Spleen (tissue), 13 donors: ENCODE measurements at regions of chr9 and their contacts with region 1.

Region 1: GRCh38 chr9:1718836-1719235 is 296.3 kb upstream of the SMARCA2 start:
- DNase-seq: no peak
- H3K4me3 ChIP-seq: no peak overlapping the region
- H3K27ac ChIP-seq: no peak overlapping the region
- H3K4me1 ChIP-seq: no peaks in the 10 kb centered on the region
- H3K27me3 ChIP-seq: peaks cover 0 to 4% (median 0%) of the 10 kb centered on the region in 7 donors
- CTCF ChIP-seq: no peak
- POLR2A ChIP-seq: no peak

Region 2: DNA sequence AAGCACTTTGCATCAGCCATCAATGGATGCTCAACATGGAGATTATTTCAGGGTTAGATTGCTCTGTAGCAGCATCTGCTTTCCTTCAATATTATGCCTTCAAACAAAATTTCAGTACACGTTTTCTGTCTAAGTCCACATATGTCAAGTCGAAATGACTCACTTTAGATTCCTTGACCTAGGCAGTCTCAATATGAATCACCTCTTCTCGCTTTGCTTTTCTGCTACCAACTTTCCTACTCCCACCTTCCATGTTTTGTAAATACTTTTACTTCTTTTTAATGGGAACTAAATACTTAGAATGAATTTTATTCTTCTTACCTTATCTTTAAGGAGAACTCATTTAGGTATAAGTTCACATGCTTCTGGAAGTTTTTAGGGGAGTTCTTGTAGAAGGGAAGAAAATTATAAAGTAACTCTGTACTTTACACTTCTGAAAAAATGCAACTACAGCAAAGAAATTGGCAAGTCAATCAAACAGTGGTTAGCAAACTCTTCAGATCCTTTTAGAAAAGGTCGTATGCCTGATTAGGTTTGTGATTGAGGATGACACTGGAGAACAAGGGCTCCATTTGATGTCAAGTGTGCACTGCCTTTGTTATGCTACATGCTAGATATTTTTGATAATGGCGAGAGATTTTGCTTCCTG is 182.2 kb before region 1 on chr9:
- intact Hi-C with region 1: no loop called
- DNase-seq: no peak
- H3K4me3 ChIP-seq: no peak overlapping the region
- H3K27ac ChIP-seq: no peak overlapping the region
- H3K4me1 ChIP-seq: no peaks in the 10 kb centered on the region
- H3K27me3 ChIP-seq: no peaks in the 10 kb centered on the region
- CTCF ChIP-seq: no peak
- POLR2A ChIP-seq: no peak

Region 3: GRCh38 chr9:1647776-1648175 is 71.1 kb before region 1 on chr9:
- intact Hi-C with region 1: no loop called
- DNase-seq: no peak
- H3K4me3 ChIP-seq: no peak overlapping the region
- H3K27ac ChIP-seq: no peak overlapping the region
- H3K4me1 ChIP-seq: no peaks in the 10 kb centered on the region
- H3K27me3 ChIP-seq: peaks cover 0 to 11% (median 0%) of the 10 kb centered on the region in 7 donors
- CTCF ChIP-seq: no peak
- POLR2A ChIP-seq: no peak

Region 4: GRCh38 chr9:1775230-1775629 is 56.4 kb after region 1 on chr9:
- intact Hi-C with region 1: loop called (anchors 10 kb)
- DNase-seq: no peak
- H3K4me3 ChIP-seq: no peak overlapping the region
- H3K27ac ChIP-seq: no peak overlapping the region
- H3K4me1 ChIP-seq: no peaks in the 10 kb centered on the region
- H3K27me3 ChIP-seq: no peaks in the 10 kb centered on the region
- CTCF ChIP-seq: no peak
- POLR2A ChIP-seq: no peak

Region 5: GRCh38 chr9:2087500-2088313 is 368.9 kb after region 1 on chr9:
- intact Hi-C with region 1: loop called (anchors 10 kb)
- DNase-seq: no peak
- H3K4me3 ChIP-seq: no peak overlapping the region
- H3K27ac ChIP-seq: no peak overlapping the region
- H3K4me1 ChIP-seq: no peaks in the 10 kb centered on the region
- H3K27me3 ChIP-seq: no peaks in the 10 kb centered on the region
- CTCF ChIP-seq: peak; percentile 51 to 82 (median 71)
- POLR2A ChIP-seq: no peak